Natural killer cell (primary cell): ENCODE measurements at regions of chr18 and their contacts with region 1.

Region 1: GRCh38 chr18:44507729-44508325 is 172.9 kb upstream of the SETBP1 start:
- DNase-seq: peak; percentile 23 to 44
- ATAC-seq: peak; percentile 71 to 79 (median 73)
- H3K4me3 ChIP-seq: no peak overlapping the region
- H3K4me3 Mint-ChIP-seq: no peak overlapping the region
- H3K27ac ChIP-seq: peak overlapping the region; percentile 41
- H3K27ac Mint-ChIP-seq: no peak overlapping the region
- H3K4me1 ChIP-seq: peaks cover 13% of the 10 kb centered on the region
- H3K4me1 Mint-ChIP-seq: peaks cover 2 to 12% of the 10 kb centered on the region in 2 donors
- H3K27me3 ChIP-seq: no peaks in the 10 kb centered on the region
- H3K27me3 Mint-ChIP-seq: no peaks in the 10 kb centered on the region
- CTCF ChIP-seq: no peak

Region 2: GRCh38 chr18:44358402-44358801 is 149.4 kb before region 1 on chr18:
- intact Hi-C with region 1: loop called (anchors 10 kb)
- DNase-seq: no peak
- ATAC-seq: peak in 1 of 3 donors; percentile 34
- H3K4me3 ChIP-seq: no peak overlapping the region
- H3K4me3 Mint-ChIP-seq: no peak overlapping the region
- H3K27ac ChIP-seq: no peak overlapping the region
- H3K27ac Mint-ChIP-seq: no peak overlapping the region
- H3K4me1 ChIP-seq: no peaks in the 10 kb centered on the region
- H3K4me1 Mint-ChIP-seq: no peaks in the 10 kb centered on the region
- H3K27me3 ChIP-seq: no peaks in the 10 kb centered on the region
- H3K27me3 Mint-ChIP-seq: no peaks in the 10 kb centered on the region
- CTCF ChIP-seq: no peak

Region 3: DNA sequence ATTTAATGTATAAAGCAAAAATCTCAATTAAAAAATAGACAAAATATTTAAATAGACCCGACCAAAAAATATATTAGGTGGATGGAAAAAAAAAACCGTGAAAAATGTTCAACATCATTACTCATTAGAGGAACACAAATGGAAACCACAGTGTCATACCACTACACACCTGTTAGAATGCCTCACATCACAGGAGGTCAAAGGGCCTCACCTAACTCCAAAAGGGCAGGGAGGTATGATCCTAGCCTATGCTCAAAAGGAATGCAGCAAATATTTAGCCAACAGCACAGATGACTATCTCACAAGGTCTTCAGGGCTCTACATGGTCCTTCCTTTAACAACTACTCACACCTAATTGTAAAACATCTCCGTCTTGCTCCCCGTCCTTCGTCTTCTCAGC is 12.7 kb before region 1 on chr18:
- intact Hi-C with region 1: no loop called
- DNase-seq: no peak
- ATAC-seq: no peak
- H3K4me3 ChIP-seq: no peak overlapping the region
- H3K4me3 Mint-ChIP-seq: no peak overlapping the region
- H3K27ac ChIP-seq: no peak overlapping the region
- H3K27ac Mint-ChIP-seq: no peak overlapping the region
- H3K4me1 ChIP-seq: no peaks in the 10 kb centered on the region
- H3K4me1 Mint-ChIP-seq: peaks cover 6 to 14% of the 10 kb centered on the region in 2 donors
- H3K27me3 ChIP-seq: no peaks in the 10 kb centered on the region
- H3K27me3 Mint-ChIP-seq: peaks cover 0 to 4% of the 10 kb centered on the region in 2 donors
- CTCF ChIP-seq: no peak

Region 4: DNA sequence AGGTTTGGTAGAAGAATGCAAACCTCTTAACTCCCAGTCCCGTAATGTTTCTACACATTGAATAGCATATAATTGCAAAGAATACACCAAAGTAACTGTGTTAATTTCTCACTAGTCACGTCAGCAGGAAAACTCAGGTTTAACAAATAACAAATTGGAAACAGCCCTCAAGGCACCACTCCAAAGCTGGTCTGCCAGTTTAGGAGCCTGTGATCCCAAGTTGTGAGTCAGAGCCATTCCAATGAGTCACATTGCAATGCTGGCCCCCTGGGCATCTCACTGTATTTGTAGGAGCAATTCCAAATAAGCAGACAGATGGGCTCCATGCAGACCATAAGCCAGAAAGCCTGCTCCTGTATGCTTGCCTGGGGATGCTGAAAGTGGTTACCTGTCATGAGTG is 29.7 kb after region 1 on chr18:
- intact Hi-C with region 1: no loop called
- DNase-seq: no peak
- ATAC-seq: no peak
- H3K4me3 ChIP-seq: no peak overlapping the region
- H3K4me3 Mint-ChIP-seq: no peak overlapping the region
- H3K27ac ChIP-seq: no peak overlapping the region
- H3K27ac Mint-ChIP-seq: no peak overlapping the region
- H3K4me1 ChIP-seq: no peaks in the 10 kb centered on the region
- H3K4me1 Mint-ChIP-seq: peaks cover 0 to 6% of the 10 kb centered on the region in 2 donors
- H3K27me3 ChIP-seq: no peaks in the 10 kb centered on the region
- H3K27me3 Mint-ChIP-seq: peaks cover 0 to 7% of the 10 kb centered on the region in 2 donors
- CTCF ChIP-seq: no peak

Region 5: GRCh38 chr18:44838971-44839666 is 331.3 kb after region 1 on chr18:
- intact Hi-C with region 1: loop called (anchors 5 kb)
- DNase-seq: peak; percentile 70 to 73
- ATAC-seq: peak; percentile 94 to 97 (median 94)
- H3K4me3 ChIP-seq: no peak overlapping the region
- H3K4me3 Mint-ChIP-seq: peak overlapping the region; percentile 67
- H3K27ac ChIP-seq: peak overlapping the region; percentile 69
- H3K27ac Mint-ChIP-seq: peak overlapping the region; percentile 57 to 76
- H3K4me1 ChIP-seq: peaks cover 33% of the 10 kb centered on the region
- H3K4me1 Mint-ChIP-seq: peaks cover 68 to 75% of the 10 kb centered on the region in 2 donors
- H3K27me3 ChIP-seq: no peaks in the 10 kb centered on the region
- H3K27me3 Mint-ChIP-seq: peaks cover 0 to 2% of the 10 kb centered on the region in 2 donors
- CTCF ChIP-seq: no peak

Region 6: GRCh38 chr18:45106331-45106774 is 598.5 kb after region 1 on chr18:
- intact Hi-C with region 1: loop called (anchors 5 kb)
- DNase-seq: peak; percentile 48 to 59
- ATAC-seq: peak; percentile 84 to 94 (median 92)
- H3K4me3 ChIP-seq: no peak overlapping the region
- H3K4me3 Mint-ChIP-seq: no peak overlapping the region
- H3K27ac ChIP-seq: peak overlapping the region; percentile 42
- H3K27ac Mint-ChIP-seq: no peak overlapping the region
- H3K4me1 ChIP-seq: peaks cover 35% of the 10 kb centered on the region
- H3K4me1 Mint-ChIP-seq: peaks cover 35 to 49% of the 10 kb centered on the region in 2 donors
- H3K27me3 ChIP-seq: no peaks in the 10 kb centered on the region
- H3K27me3 Mint-ChIP-seq: peaks cover 14 to 34% of the 10 kb centered on the region in 2 donors
- CTCF ChIP-seq: no peak